Panc1 (cell line): ENCODE measurements at regions of chr1 and their contacts with region 1.

Region 1: DNA sequence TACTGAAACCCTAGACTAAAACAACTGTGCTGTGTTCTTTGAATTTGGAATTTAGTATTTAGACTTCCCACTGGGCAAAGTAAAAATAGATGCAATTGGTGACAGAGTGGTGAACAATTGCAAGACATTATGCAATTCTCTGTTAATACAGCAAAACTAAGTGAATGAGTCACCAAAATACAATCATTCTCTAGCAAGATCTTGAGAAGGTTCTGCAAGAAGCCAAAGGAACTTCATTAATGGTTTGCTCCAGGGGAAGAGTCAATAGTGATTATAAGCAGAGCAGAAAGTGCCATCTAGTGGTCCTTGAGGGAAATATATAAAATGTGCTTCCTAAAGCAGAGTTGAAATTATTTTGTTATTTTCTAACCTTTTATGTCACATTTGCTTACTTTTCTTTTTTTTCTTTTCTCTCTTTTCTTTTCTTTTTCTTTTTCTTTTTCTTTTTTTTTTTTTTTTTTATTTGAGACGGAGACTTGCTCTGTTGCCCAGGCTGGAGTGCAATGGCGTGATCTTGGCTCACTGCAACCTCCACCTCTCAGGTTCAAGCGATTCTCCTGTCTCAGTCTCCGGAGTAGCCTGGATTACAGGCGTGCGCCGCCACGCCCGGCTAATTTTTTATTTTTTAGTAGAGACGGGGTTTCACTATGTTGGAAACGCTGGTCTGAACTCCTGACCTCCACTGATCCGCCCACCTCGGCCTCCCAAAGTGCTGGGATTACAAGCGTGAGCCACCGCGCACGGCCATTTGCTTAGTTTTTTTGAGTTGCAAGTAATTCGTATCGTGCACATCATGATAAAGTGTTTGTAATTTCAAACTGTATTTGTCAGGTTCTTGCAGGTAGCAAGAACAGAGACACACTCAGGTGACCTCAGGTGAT is 99.2 kb downstream of the CTH start:
- DNase-seq: peak; percentile 52
- ATAC-seq: peak; percentile 87
- H3K4me3 ChIP-seq: 0 out of 4 replicates have a peak overlapping the region, but pooled peaks of 1 of the 2 experiments have one; percentile 4
- H3K27ac ChIP-seq: no peak overlapping the region
- H3K4me1 ChIP-seq: no peaks in the 10 kb centered on the region
- H3K27me3 ChIP-seq: peaks cover 3% of the 10 kb centered on the region; the same call in 1 of the 2 replicates
- CTCF ChIP-seq: peak; percentile 71; the same call in 1 of the 2 replicates

Region 2: GRCh38 chr1:70134148-70134547 is 376.1 kb before region 1 on chr1:
- CTCF ChIA-PET with region 1: interaction called, 7 read pairs
- POLR2A ChIA-PET with region 1: no interaction called
- in situ Hi-C with region 1: no loop called
- intact Hi-C with region 1: loop called (anchors 2 kb)
- DNase-seq: no peak
- ATAC-seq: no peak
- H3K4me3 ChIP-seq: no peak overlapping the region
- H3K27ac ChIP-seq: no peak overlapping the region
- H3K4me1 ChIP-seq: 0 out of 2 replicates have a peak, but pooled peaks cover 4% of the 10 kb centered on the region
- H3K27me3 ChIP-seq: peaks cover 4% of the 10 kb centered on the region; the same call in 1 of the 2 replicates
- CTCF ChIP-seq: no peak

Region 3: DNA sequence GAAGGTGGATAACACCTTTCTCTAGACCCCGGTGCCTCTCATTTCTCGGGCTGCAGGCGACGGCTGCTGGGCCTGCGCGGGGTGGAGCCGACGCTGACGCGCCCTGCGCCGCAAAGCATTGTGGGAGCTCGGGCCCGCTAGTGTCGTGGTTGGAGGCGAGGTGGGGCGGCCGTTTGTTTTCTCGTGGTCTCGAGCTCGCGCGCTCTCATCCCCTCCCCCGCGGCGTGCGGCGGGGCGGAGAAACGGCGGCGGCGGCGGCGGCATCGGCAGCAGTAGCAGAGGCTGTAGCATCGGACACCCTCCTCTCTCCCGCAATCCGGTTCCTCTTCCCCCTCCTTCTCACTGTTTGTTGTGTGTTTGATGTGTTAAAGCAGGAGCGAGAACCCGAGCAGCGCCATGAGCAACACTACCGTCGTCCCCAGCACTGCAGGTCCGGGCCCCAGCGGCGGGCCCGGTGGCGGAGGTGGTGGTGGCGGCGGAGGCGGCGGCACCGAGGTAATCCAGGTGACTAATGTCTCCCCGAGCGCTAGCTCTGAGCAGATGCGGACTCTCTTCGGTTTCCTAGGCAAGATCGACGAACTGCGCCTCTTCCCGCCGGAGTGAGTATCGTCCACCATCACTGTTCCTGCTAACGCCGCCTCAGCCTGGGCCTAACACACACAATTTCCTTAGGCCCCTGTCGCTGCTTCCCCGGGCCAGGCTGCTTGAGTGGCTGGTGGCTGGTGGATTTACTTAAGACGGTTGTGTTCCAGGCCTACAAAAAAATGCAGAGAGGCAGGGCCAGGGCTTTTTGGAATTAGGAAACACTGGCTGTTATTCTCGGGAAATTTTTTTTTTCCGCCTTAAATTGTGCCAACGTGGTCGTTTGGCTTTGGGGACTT is 288.8 kb before region 1 on chr1 and contains the start of gene SRSF11:
- CTCF ChIA-PET with region 1: no interaction called
- POLR2A ChIA-PET with region 1: no interaction called
- in situ Hi-C with region 1: no loop called
- intact Hi-C with region 1: no loop called
- DNase-seq: peak; percentile 76
- ATAC-seq: peak; percentile 99
- H3K4me3 ChIP-seq: peak within 1 kb of the TSS; percentile 64 to 94
- H3K27ac ChIP-seq: peak within 1 kb of the TSS; percentile 98
- H3K4me1 ChIP-seq: peaks cover 33% of the 10 kb centered on the region
- H3K27me3 ChIP-seq: no peaks in the 10 kb centered on the region
- CTCF ChIP-seq: no peak
- total RNA-seq, gene SRSF11: 145 TPM

Region 4: GRCh38 chr1:70256664-70257063 is 253.6 kb before region 1 on chr1:
- CTCF ChIA-PET with region 1: no interaction called
- POLR2A ChIA-PET with region 1: no interaction called
- in situ Hi-C with region 1: no loop called
- intact Hi-C with region 1: loop called (anchors 10 kb)
- DNase-seq: no peak
- ATAC-seq: peak; percentile 36
- H3K4me3 ChIP-seq: no peak overlapping the region
- H3K27ac ChIP-seq: no peak overlapping the region
- H3K4me1 ChIP-seq: no peaks in the 10 kb centered on the region
- H3K27me3 ChIP-seq: no peaks in the 10 kb centered on the region
- CTCF ChIP-seq: no peak